Activated naive CD4-positive, alpha-beta T cell treated with anti-CD3 and anti-CD28 coated beads for 36 hours (primary cell): ENCODE measurements at regions of chr6 and their contacts with region 1.

Region 1: GRCh38 chr6:109382576-109383437 is 540 bp upstream of the CD164 start:
- DNase-seq: peak; percentile 94
- H3K4me3 Mint-ChIP-seq: peak overlapping the region; percentile 96
- H3K27ac Mint-ChIP-seq: peak overlapping the region; percentile 100
- H3K4me1 Mint-ChIP-seq: peaks cover 35% of the 10 kb centered on the region
- H3K27me3 Mint-ChIP-seq: no peaks in the 10 kb centered on the region

Region 2: DNA sequence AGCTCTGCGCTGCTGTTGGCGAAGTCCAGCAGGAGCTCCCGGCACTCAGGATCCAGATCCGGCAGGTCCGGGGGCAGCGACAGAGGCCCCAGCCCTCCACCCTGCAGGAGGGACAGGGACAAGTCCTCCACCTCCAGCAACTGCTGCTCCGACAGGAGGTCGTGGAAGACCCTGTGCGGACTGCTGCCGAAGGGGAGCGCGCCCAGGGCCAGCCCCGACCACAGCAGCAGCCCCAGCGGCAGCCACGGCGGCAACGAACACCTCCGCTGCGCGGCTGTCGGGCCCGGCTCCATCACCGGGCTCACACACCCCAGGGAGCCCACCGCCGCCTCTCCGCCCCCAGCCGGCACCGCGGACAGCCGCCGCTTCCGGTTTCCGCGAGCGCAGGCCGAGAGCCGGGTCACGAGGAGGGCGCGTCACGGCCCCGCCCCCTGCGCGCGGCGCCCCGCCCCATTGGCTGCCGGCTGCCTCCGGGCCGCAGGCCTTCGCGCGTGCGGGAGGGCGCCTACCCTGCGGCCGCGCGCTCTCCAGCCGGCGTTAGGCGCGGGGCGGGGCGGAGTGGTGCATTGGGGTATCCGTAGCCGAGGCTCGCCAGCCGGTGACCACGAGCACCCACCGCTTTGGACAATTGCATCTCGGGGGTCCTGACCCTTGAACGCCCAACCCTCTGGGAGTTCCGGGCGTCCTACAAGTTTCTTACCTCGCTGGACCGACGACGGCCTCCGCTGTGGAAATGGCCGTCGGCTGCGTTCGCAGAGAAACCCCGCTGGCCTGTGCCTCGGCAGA is 1308.3 kb before region 1 on chr6 and contains the start of gene OSTM1:
- CTCF ChIA-PET with region 1: no interaction called
- intact Hi-C with region 1: loop called (anchors 5 kb)
- DNase-seq: peak; percentile 93
- H3K4me3 Mint-ChIP-seq: peak within 1 kb of the TSS; percentile 80
- H3K27ac Mint-ChIP-seq: peak within 1 kb of the TSS; percentile 78
- H3K4me1 Mint-ChIP-seq: peaks cover 30% of the 10 kb centered on the region
- H3K27me3 Mint-ChIP-seq: no peaks in the 10 kb centered on the region
- total RNA-seq, gene OSTM1: 7.1 to 7.5 TPM

Region 3: DNA sequence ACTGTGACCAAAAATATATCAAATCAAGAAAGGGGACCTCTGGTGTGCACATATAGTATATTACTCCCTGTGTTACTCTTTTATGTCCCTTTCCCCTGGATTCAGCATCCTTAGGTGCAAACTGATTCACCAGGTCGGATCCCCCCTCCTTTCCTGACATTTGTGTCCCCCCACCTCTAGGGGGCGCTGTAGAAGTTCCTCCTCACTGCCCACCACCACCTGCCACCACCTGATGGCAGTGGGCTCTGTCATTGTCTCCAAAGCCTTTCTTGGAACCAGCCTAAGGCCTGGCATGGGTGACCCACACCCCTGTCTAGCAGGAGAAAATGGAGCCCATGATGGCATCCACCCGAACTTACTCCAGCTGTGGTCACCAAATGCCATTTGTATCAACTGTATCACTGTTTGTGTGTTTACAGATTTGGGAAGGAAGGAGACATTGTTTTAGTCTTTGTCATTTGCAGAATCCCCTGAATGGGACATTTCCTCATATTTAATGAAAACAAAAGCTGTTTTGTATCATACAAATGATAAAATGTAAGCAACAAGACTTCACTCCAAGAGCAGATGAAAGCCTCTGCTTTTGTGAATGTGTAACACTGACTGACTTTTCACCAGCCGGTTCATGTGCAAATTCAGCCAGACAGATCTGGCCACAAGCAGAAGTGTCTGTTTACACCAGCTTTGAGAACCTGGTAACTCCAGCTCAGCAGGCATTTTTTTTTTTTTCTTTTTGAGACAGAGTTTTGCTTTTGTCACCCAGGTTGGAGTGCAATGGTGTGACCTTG is 468.4 kb before region 1 on chr6:
- CTCF ChIA-PET with region 1: no interaction called
- intact Hi-C with region 1: loop called (anchors 10 kb)
- DNase-seq: peak; percentile 71
- H3K4me3 Mint-ChIP-seq: no peak overlapping the region
- H3K27ac Mint-ChIP-seq: no peak overlapping the region
- H3K4me1 Mint-ChIP-seq: no peaks in the 10 kb centered on the region
- H3K27me3 Mint-ChIP-seq: no peaks in the 10 kb centered on the region

Region 4: GRCh38 chr6:109202409-109203284 is 180.2 kb before region 1 on chr6:
- CTCF ChIA-PET with region 1: interaction called, 6 read pairs
- intact Hi-C with region 1: loop called (anchors 1 kb)
- DNase-seq: peak; percentile 62
- H3K4me3 Mint-ChIP-seq: no peak overlapping the region
- H3K27ac Mint-ChIP-seq: no peak overlapping the region
- H3K4me1 Mint-ChIP-seq: peaks cover 7% of the 10 kb centered on the region
- H3K27me3 Mint-ChIP-seq: no peaks in the 10 kb centered on the region

Region 5: DNA sequence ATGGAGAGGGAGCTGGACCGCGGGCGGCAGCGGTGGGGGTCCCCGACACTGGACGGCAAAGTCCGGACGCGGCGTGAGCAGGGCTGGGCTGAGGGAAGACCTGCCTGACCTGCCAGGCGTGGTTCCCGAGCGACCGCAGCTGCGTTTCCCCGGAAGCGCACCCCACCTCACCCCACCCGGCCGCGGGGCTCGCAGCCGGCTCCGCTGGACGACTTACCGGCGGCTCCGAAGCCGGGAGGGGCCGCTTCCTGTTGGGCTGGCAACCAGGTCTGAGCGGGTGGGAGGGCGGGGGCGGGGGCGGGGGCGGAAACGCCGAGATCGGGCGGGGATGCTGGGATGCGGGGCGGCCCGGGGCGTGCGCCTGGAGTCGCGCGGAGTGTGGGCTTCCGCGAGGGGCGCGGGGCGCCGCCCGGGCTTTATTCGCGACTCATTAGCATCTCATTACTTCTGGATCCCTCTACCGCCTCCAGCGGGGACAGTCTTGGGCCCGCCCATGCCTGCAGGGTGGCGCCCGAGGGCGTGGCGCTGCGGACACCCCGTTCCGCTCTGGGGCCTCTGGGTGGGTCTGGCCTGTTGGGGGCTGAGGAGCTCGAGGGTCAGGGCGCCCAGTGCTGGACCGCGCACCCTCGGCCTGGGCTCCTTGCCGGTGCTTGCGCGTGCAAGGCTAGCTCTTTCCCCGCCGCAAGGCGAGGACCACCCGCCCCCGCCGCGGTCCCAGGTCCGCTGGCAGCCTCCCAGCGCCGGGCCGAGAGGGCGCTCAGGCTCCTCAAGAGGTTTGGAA is 72.9 kb after region 1 on chr6 and contains the start of gene MICAL1:
- CTCF ChIA-PET with region 1: interaction called, 3 read pairs
- intact Hi-C with region 1: loop called (anchors 1 kb)
- DNase-seq: peak; percentile 69
- H3K4me3 Mint-ChIP-seq: peak within 1 kb of the TSS; percentile 91
- H3K27ac Mint-ChIP-seq: peak within 1 kb of the TSS; percentile 82
- H3K4me1 Mint-ChIP-seq: peaks cover 54% of the 10 kb centered on the region
- H3K27me3 Mint-ChIP-seq: no peaks in the 10 kb centered on the region
- total RNA-seq, gene MICAL1: 20.4 to 22.9 TPM

Region 6: DNA sequence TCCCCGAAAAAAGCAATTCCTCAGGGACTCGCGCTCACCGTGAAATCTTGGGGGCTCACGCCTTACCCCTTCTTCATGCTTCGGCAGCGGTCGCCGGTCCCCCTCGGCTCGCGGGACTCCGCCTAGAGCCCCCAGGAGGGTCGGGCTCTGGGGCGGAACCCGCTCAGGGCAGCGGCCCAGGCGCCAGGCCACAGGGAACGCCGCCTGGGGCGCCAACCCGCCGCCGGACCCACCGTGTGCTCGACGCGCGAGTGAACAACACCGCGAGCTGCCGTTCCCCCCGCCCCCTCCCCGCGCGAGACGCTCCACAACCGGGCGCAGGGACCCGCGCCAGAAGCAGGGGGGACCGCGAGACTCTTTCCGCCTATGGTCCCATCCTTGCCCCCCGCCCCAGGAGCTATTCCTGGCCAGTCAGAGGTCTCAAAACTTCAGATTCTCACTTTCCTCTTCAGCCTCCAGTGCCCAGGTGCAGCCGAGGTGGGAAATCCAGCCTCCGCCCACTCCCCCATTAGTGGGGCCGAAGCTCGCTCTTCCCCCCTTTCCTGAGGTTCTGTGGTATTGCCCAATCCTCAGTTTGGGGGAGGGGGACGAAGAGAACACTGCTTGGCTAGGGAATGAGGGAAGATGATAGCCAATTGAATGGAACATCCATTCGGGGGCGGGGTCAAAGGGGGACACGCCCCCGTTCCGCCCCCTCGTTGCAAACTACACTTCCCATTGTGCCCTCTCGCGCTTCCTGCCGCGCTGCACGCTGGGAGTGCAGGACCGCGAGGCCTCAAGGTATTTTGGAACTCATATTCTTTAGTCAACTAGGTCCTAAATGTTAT is 796.8 kb after region 1 on chr6 and contains the start of gene WASF1:
- CTCF ChIA-PET with region 1: no interaction called
- intact Hi-C with region 1: loop called (anchors 5 kb)
- DNase-seq: peak; percentile 93
- H3K4me3 Mint-ChIP-seq: no peak within 1 kb of the TSS
- H3K27ac Mint-ChIP-seq: peak within 1 kb of the TSS; percentile 33
- H3K4me1 Mint-ChIP-seq: peaks cover 5% of the 10 kb centered on the region
- H3K27me3 Mint-ChIP-seq: peaks cover 7% of the 10 kb centered on the region
- total RNA-seq, gene WASF1: 1.3 to 1.5 TPM